Right ventricle myocardium inferior (tissue), 1 donor: ENCODE measurements at regions of chr12 and their contacts with region 1.

Region 1: GRCh38 chr12:95336390-95337067 is 118.9 kb downstream of the VEZT start:
- DNase-seq: no peak
- ATAC-seq: peak; percentile 88

Region 2: GRCh38 chr12:94133964-94134795 is 1202.3 kb before region 1 on chr12:
- intact Hi-C with region 1: loop called (anchors 2 kb)
- DNase-seq: no peak
- ATAC-seq: peak; percentile 68

Region 3: GRCh38 chr12:94545935-94546771 is 790.4 kb before region 1 on chr12:
- intact Hi-C with region 1: loop called (anchors 5 kb)
- DNase-seq: no peak
- ATAC-seq: peak; percentile 73

Region 4: DNA sequence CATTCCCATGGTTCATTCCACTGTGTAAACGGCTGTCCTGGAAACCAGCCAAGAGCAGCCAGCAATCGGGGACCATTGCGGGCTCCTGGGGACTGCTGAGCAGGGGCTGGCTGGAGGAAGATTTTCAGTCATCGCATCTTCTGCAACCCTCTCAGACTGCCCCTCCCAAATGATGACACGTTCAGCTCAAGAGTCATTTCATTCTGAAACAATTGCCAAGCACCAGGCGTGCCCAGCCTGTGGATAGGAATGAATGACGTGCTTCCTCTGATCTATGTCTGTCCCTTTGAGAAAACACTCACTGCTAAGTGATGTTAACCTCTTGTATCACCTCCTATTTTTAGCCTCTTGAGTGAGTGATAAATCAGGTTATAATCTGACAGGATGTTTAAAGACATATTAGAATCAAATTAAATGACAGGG is 395.1 kb before region 1 on chr12:
- intact Hi-C with region 1: no loop called
- DNase-seq: no peak
- ATAC-seq: peak; percentile 87

Region 5: DNA sequence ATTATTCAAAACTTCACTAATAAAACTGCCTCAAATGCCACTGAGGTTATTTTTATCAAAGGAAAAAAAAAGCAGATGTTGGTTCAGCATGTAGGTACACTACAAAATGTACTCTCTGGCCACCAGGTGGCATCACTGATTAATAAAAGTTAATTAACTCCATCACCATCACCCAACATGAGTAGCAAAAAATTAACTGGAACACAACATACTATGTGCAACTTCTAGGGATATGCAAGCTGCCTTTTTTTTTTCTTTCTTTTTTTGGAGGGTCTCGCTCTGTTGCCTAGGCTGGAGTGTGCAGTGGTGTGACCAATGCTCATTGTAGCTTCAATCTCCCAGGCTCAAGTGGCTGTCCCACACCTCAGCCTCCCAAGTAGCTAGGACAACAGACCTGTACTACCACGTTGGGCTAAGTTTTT is 219.3 kb before region 1 on chr12:
- intact Hi-C with region 1: loop called (anchors 1 kb)
- DNase-seq: no peak
- ATAC-seq: peak; percentile 88

Region 6: GRCh38 chr12:95217377-95218149 is 119.0 kb before region 1 on chr12 and contains the starts of genes FGD6 and VEZT:
- intact Hi-C with region 1: loop called (anchors 5 kb)
- DNase-seq: peak; percentile 99
- ATAC-seq: peak; percentile 97
- total RNA-seq, gene FGD6: 22.2 TPM
- total RNA-seq, gene VEZT: 51.5 TPM

Region 7: DNA sequence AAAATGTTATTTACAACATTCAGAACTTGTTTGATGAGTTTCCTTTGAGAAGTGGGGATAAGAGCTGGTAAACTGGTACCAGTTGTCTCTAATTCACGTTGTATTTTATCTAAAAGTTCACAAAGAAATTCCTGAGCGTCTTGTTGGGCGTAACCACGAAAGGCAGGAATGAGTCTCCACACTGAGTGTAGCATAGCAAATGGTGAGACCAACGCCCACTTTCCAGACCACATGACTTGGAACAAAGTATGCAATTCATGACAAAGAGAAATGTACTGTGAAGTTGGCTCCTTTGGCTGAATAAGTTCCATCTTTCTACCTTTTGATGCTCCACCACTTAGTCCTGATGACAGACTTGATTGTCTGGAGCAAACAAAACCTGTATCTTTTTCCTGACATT is 196.3 kb after region 1 on chr12:
- intact Hi-C with region 1: loop called (anchors 5 kb)
- DNase-seq: no peak
- ATAC-seq: no peak